Heart right ventricle (tissue), 16 donors: ENCODE measurements at regions of chr10 and their contacts with region 1.

Region 1: GRCh38 chr10:72273410-72274212 is at the start of gene DDIT4:
- DNase-seq: peak; percentile 99 to 100
- ATAC-seq: peak; percentile 90 to 95 (median 94)
- H3K4me3 ChIP-seq: peak within 1 kb of the TSS; percentile 55 to 96 (median 82)
- H3K27ac ChIP-seq: peak within 1 kb of the TSS; percentile 93 to 100 (median 98)
- H3K4me1 ChIP-seq: peaks cover 0 to 52% (median 45%) of the 10 kb centered on the region in 9 donors
- H3K27me3 ChIP-seq: no peaks in the 10 kb centered on the region
- CTCF ChIP-seq: no peak
- total RNA-seq, gene DDIT4: 13.6 to 102 (median 30.2) TPM

Region 2: DNA sequence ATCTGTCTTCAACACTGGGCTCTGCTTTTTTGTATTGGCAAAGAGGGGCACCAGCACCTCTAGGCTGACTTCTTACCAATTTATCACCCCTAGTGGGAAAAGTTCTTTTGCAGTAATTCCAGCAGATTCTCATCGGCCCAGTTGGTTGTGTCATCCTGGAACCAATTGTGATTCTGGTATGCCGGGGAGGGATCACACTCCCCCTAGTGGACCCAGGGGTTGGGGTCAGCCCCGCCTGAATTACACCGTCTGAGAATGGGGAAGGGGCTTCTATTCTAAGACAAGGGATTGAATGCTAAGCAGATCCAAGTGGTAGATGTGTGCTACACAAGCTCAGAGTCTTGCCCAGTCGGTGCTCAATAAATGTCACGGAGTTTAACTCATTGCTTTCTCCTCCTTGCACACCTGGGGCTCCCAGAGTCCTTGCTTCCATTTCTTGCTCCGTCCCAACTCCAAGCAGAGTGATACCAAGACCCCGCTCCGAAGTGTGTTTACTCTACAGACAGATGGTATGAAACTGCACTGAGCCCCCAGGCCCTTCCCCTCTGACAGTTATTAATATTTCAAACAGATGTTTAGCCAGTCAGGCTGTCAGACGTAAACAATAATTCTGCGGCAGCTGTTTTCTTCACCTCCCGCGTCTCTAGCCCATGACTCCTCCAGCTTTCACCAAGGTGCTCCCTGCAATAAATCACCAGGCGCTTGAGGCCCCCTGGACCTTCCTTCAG is 625.9 kb before region 1 on chr10:
- intact Hi-C with region 1: no loop called
- DNase-seq: no peak
- ATAC-seq: no peak
- H3K4me3 ChIP-seq: no peak overlapping the region
- H3K27ac ChIP-seq: no peak overlapping the region
- H3K4me1 ChIP-seq: peaks cover 0 to 3% (median 0%) of the 10 kb centered on the region in 9 donors
- H3K27me3 ChIP-seq: no peaks in the 10 kb centered on the region
- CTCF ChIP-seq: peak in 8 of 9 donors; percentile 19 to 55 (median 46)

Region 3: DNA sequence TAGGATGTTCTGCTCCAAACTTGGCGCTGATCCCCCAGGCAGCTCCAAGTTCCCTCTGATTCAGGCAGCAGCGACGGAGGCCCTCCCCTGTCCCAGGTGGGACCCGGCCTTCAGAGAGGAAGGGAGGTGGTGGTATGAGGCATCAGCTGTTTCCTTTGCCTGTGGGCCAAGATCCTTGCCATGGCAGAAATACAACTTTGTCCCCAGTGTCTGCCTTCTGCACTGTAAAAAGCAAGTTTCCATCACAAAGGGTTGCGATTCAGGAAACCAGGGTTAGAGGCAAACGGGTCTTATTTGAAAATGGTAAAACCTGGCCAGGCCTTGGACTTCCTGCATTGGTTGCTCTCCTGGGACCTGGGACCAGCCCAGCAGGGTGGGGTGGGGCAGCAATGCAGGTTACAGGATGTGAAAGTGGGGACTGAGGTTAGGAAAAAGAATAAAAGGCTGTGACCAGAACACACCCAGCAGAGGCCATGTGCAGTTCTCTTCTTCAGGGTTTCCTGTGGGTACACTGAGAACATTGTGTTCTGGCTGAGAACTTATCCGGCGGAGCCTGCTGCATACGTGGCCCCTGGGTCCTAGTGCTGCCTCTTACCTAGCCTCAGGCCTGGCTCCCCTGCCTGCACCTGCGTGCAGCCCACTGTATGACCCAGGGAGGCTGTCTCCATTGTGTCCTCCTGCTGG is 25.0 kb before region 1 on chr10:
- intact Hi-C with region 1: loop called in 3 of 10 experiments (anchors 1 to 2 kb)
- DNase-seq: peak; percentile 81 to 87
- ATAC-seq: peak; percentile 83 to 91 (median 89)
- H3K4me3 ChIP-seq: peak overlapping the region in 6 of 10 donors; percentile 4 to 31 (median 22)
- H3K27ac ChIP-seq: peak overlapping the region; percentile 78 to 94 (median 88)
- H3K4me1 ChIP-seq: peaks cover 47 to 100% (median 90%) of the 10 kb centered on the region in 9 donors
- H3K27me3 ChIP-seq: no peaks in the 10 kb centered on the region
- CTCF ChIP-seq: no peak

Region 4: DNA sequence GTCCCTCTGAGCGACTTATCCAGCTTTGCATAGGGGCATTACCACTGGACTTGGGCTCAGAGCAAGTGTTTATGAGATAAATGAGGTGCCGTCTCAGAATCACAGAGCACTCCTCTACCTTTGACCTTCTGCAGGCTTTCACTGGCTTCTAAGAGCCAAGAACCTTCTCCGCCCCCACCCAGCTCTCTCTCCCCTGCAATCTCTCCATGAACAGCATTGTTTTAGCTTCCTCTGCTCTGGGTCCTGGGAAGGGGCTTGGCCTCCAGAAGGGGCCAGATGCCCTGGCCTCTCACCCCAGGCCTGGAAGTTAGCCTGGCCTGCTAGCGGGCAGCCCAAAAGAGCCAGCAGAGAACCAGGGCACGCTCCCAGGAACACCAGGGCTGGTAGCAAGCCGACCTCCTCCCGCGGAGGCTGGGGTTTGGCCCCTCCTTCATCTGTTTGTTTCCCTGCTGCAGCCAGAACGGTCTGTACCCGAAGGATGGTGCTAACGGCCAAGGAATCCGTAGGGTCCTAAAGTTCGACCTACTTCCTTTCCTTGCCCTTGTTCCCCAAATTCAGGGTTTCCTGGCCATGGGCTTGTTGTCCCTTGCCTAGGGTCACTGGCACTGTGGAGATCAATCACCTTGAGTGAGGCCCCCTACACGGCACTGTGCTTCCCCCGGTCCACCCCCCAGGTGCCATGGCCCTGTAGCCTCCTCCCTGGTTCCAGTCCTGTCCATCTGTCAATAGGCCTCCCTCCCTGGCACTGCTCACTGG is 18.6 kb before region 1 on chr10:
- intact Hi-C with region 1: loop called in 2 of 10 experiments (anchors 1 to 2 kb)
- DNase-seq: peak; percentile 87 to 90
- ATAC-seq: peak; percentile 85 to 94 (median 91)
- H3K4me3 ChIP-seq: peak overlapping the region in 7 of 10 donors; percentile 1 to 28 (median 20)
- H3K27ac ChIP-seq: peak overlapping the region; percentile 84 to 97 (median 90)
- H3K4me1 ChIP-seq: peaks cover 41 to 97% (median 87%) of the 10 kb centered on the region in 9 donors
- H3K27me3 ChIP-seq: no peaks in the 10 kb centered on the region
- CTCF ChIP-seq: peak in 2 of 9 donors; percentile 14 to 36

Region 5: GRCh38 chr10:72260588-72261322 is 12.9 kb before region 1 on chr10:
- intact Hi-C with region 1: loop called in 2 of 10 experiments (anchors 1 to 2 kb)
- DNase-seq: peak; percentile 77 to 89
- ATAC-seq: peak; percentile 88 to 95 (median 92)
- H3K4me3 ChIP-seq: peak overlapping the region; percentile 18 to 61 (median 55)
- H3K27ac ChIP-seq: peak overlapping the region; percentile 84 to 97 (median 93)
- H3K4me1 ChIP-seq: peaks cover 18 to 77% (median 58%) of the 10 kb centered on the region in 9 donors
- H3K27me3 ChIP-seq: no peaks in the 10 kb centered on the region
- CTCF ChIP-seq: peak in 3 of 9 donors; percentile 4 to 22 (median 12)

Region 6: DNA sequence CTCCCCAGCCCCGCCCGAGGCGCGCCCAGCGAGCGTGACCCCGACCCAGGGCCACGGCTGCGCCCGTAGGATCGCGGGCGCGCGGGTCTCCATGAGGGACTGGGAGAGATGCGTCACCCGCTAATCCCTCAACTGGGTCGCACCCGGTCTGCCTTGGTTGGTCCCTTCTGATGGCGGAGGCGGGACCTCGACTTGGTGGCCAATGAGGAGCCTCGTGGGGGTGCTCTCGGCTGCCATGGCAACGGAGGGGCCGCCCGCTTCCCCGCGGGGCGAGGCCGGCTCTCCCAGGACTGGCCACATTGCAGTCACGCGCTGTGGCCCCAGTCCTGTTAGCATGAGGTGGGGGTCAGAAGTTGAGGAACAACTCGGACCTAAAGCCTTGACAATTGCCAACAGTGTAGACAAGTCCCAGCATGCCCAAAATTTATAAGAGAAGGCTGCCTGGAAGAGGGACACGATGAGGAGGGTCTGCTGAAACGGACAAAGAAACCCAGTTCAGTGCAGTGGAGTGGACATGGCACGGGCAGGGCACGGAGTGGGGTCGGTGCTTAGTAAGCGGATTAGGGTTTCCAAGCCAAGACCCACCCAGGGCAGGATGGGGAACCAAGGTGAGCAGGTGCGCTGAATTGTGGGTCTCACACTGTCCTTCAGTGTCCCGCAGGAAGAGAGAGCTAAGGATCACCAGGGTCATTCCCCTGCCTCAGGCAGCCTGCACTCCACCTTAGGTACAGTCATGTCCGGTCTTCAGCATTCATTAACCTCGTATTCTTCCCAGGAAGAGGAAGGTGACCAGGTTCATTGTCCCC is 24.6 kb after region 1 on chr10:
- intact Hi-C with region 1: loop called in 1 of 10 experiments (anchors 1 kb)
- DNase-seq: peak; percentile 97 to 98
- ATAC-seq: peak; percentile 96 to 98 (median 96)
- H3K4me3 ChIP-seq: peak overlapping the region; percentile 29 to 78 (median 68)
- H3K27ac ChIP-seq: peak overlapping the region; percentile 87 to 99 (median 90)
- H3K4me1 ChIP-seq: peaks cover 0 to 32% (median 10%) of the 10 kb centered on the region in 9 donors
- H3K27me3 ChIP-seq: no peaks in the 10 kb centered on the region
- CTCF ChIP-seq: peak in 1 of 9 donors; percentile 5

Region 7: GRCh38 chr10:72319416-72320254 is 46.0 kb after region 1 on chr10:
- intact Hi-C with region 1: loop called in 9 of 10 experiments (anchors 2 to 5 kb)
- DNase-seq: peak; percentile 90 to 96
- ATAC-seq: peak; percentile 64 to 92 (median 80)
- H3K4me3 ChIP-seq: peak overlapping the region in 9 of 10 donors; percentile 25 to 57 (median 50)
- H3K27ac ChIP-seq: peak overlapping the region; percentile 72 to 99 (median 90)
- H3K4me1 ChIP-seq: peaks cover 42 to 98% (median 73%) of the 10 kb centered on the region in 9 donors
- H3K27me3 ChIP-seq: no peaks in the 10 kb centered on the region
- CTCF ChIP-seq: peak in 1 of 9 donors; percentile 9

Region 8: DNA sequence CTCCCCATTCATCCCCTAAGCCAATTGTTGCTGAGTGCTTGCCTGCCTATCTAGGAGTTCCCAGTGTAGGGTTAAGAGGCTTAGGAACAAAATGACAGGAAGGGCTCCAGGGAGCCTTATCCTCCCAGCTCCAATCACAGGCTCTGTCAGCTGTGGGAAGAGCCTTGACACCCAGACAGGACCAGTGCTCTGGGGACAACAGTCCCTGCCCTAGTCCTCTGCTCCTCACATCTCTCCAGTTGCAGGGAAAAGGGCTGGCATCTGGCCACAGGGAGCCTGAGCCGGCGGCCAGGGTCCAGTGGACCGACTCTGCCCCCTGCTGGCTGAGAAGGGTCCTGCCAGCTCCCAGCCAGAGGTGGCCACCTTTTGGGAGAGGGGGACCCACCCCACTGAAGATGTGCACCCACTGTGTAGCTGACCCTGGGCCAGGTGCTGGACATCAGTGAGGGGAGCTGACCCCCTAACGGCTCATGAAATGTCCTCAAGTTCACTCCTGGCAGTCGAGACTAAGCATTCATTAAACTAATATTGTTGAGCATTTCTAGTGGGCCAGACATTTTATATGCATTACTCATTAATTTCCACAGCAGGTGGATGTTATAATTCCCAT is 63.5 kb after region 1 on chr10:
- intact Hi-C with region 1: loop called in 2 of 10 experiments (anchors 2 to 5 kb)
- DNase-seq: peak; percentile 88 to 90
- ATAC-seq: peak; percentile 30 to 51 (median 43)
- H3K4me3 ChIP-seq: no peak overlapping the region
- H3K27ac ChIP-seq: peak overlapping the region; percentile 46 to 97 (median 90)
- H3K4me1 ChIP-seq: peaks cover 34 to 70% (median 57%) of the 10 kb centered on the region in 9 donors
- H3K27me3 ChIP-seq: no peaks in the 10 kb centered on the region
- CTCF ChIP-seq: peak; percentile 95 to 99 (median 96)

Region 9: DNA sequence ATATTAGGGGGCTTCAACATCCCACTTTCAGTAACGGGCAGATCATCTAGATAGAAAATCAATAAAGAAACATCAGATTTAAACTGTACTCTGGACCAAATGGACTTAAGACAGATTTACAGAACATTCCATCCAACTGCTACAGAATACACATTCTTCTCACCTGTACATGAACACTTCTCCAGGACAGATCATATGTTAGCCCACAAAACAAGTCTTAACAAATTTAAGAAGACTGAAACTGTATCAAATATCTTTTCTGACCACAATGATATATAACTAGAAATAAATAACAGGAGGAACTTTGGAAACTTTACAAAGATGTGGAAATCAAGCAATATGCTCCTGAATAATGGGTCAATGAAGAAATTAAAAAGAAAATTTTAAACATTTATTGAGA is 265.5 kb after region 1 on chr10:
- intact Hi-C with region 1: no loop called
- DNase-seq: no peak
- ATAC-seq: no peak
- H3K4me3 ChIP-seq: no peak overlapping the region
- H3K27ac ChIP-seq: peak overlapping the region in 1 of 10 donors; percentile 0
- H3K4me1 ChIP-seq: peaks cover 0 to 21% (median 0%) of the 10 kb centered on the region in 9 donors
- H3K27me3 ChIP-seq: no peaks in the 10 kb centered on the region
- CTCF ChIP-seq: no peak